ENCODE measurements at regions of chr16 and their contacts with region 1.

Region 1: GRCh38 chr16:27154705-27155521 is 48.4 kb upstream of the KDM8 start:
- DNase-seq: peak; percentile 61 to 88 (median 86)
- ATAC-seq: peak; percentile 80 to 81
- H3K4me3 ChIP-seq: no peak overlapping the region
- H3K27ac ChIP-seq: no peak overlapping the region
- H3K4me1 ChIP-seq: no peaks in the 10 kb centered on the region
- H3K27me3 ChIP-seq: no peaks in the 10 kb centered on the region

Region 2: DNA sequence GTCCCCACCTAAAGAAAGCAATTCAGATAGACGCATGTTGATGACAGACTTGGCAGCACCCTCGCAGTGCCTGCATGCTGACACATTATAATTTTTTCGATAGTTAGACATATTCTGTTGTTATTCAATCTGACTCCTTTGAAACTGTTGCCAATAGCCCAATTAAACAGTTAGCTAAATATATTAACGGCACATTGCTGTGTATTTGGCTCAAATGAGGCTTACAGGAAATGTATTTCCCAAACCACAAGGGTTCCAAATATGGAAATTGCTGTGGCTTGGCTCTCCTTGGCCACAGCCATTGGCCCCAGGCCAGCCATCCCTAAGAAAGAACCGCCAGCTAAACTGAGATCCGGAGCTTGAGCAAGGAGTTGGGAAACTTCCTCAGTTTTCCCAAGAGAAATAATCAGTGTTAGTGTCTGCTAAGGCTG is 57.1 kb before region 1 on chr16:
- intact Hi-C with region 1: loop called in 1 of 4 experiments (anchors 10 kb)
- DNase-seq: peak; percentile 79 to 93 (median 90)
- ATAC-seq: peak; percentile 81 to 93
- H3K4me3 ChIP-seq: no peak overlapping the region
- H3K27ac ChIP-seq: no peak overlapping the region
- H3K4me1 ChIP-seq: peaks cover 3% of the 10 kb centered on the region
- H3K27me3 ChIP-seq: no peaks in the 10 kb centered on the region

Region 3: GRCh38 chr16:27449434-27450195 is 294.7 kb after region 1 on chr16:
- intact Hi-C with region 1: loop called in 2 of 4 experiments (anchors 10 kb)
- DNase-seq: peak in 1 of 3 donors; percentile 39
- ATAC-seq: peak in 1 of 2 donors; percentile 28
- H3K4me3 ChIP-seq: no peak overlapping the region
- H3K27ac ChIP-seq: no peak overlapping the region
- H3K4me1 ChIP-seq: no peaks in the 10 kb centered on the region
- H3K27me3 ChIP-seq: no peaks in the 10 kb centered on the region

Region 4: GRCh38 chr16:27455700-27456099 is 300.8 kb after region 1 on chr16:
- intact Hi-C with region 1: loop called in 3 of 4 experiments (anchors 5 to 10 kb)
- DNase-seq: no peak
- ATAC-seq: peak; percentile 9 to 61
- H3K4me3 ChIP-seq: no peak overlapping the region
- H3K27ac ChIP-seq: no peak overlapping the region
- H3K4me1 ChIP-seq: peaks cover 2% of the 10 kb centered on the region
- H3K27me3 ChIP-seq: no peaks in the 10 kb centered on the region

Measured in right cardiac atrium (tissue), 5 donors.